Common myeloid progenitor, CD34-positive (primary cell): ENCODE measurements at regions of chr3 and their contacts with region 1.

Region 1: DNA sequence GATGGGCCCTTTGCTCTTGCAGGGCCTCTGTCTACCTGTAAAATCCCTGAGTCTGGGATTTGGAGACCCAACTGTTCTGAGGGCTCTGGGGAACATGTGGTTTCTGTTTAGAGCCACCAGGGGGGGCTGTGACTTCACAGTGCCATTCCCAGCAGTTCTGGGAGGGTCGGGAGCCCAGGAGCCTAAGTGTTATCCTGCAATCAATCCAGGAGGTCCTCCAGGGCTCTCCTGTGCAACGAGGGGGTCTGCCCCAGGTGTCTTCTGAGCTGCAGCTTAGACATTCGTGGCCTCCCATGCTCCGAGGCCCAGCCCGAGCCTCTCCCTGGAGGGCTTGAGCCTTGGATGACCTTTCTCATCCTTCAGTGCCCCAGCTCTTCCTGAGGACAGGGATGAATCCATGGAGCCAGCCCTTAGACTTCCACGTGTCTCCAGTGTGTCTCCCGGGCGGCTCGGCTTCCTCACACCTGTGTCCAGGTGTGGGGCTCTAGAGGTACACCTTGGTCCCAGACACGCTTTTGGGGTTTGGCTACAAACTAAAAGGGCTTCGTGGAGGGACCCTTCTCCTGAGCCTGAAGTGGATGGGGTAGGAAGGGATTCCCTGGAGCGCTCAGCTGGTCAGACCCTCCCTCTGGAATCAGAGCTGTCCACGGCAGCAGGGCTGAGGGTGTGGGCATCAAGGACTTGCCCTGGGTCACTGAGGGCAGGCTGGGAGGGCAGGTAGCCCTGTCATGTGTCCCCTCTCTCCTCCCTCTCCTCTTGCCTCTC is 20.3 kb upstream of the ABTB1 start:
- DNase-seq: peak; percentile 40 to 59 (median 42)
- H3K4me3 ChIP-seq: no peak overlapping the region
- H3K27ac ChIP-seq: no peak overlapping the region
- H3K4me1 ChIP-seq: no peaks in the 10 kb centered on the region
- H3K27me3 ChIP-seq: no peaks in the 10 kb centered on the region

Region 2: DNA sequence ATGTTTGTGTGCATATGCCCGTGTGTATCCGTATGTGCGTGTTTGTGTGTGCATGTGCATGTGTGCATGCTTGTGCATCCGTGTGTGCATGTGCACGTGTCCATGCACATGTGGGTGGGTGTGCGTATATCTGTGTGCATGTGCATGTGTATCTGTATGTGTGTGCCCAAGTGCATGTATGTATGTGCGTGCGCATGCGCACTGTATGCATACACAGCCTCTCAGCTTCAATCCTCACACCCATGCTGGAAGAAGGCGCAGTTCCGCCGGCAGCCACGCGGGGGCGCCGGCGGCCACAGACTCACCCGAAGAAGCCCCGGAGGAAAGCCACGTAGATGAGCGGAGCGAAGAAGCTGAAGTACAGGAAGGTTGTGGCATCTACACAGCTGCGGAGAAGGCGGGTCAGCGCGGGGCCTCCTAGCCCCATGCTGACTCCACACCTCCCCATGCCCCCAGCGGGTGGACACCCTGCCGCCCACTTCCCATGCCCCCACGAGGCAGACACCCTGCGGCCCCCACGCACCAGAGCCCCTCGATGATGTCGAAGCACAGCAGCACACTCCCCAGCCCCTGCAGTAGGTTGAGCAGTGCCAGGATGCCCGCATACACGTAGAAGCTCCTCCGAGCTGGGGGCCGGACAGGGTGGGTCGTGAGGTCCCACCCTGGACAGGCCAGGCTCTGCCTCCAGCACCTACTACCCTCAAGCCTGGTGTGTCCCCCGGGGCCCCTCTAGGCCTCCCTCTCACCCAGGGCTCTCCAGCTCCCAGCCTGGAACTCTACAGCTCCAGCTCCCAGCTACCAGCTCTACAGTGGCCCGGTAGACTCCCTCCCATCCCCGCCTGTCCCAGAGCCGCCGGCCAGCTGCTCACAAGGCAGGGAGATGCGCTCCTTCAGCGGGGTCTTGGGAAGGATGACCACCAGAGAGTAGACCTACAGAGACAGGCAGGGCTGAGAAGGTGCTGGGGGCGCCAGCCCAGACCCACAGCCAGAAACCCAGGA is 77.2 kb before region 1 on chr3:
- CTCF ChIA-PET with region 1: interaction called, 16 read pairs
- POLR2A ChIA-PET with region 1: no interaction called
- DNase-seq: peak; percentile 85 to 94 (median 91)
- H3K4me3 ChIP-seq: peak overlapping the region in 1 of 7 experiments; percentile 8
- H3K27ac ChIP-seq: no peak overlapping the region
- H3K4me1 ChIP-seq: peaks cover 0 to 9% (median 6%) of the 10 kb centered on the region in 4 experiments
- H3K27me3 ChIP-seq: no peaks in the 10 kb centered on the region

Region 3: DNA sequence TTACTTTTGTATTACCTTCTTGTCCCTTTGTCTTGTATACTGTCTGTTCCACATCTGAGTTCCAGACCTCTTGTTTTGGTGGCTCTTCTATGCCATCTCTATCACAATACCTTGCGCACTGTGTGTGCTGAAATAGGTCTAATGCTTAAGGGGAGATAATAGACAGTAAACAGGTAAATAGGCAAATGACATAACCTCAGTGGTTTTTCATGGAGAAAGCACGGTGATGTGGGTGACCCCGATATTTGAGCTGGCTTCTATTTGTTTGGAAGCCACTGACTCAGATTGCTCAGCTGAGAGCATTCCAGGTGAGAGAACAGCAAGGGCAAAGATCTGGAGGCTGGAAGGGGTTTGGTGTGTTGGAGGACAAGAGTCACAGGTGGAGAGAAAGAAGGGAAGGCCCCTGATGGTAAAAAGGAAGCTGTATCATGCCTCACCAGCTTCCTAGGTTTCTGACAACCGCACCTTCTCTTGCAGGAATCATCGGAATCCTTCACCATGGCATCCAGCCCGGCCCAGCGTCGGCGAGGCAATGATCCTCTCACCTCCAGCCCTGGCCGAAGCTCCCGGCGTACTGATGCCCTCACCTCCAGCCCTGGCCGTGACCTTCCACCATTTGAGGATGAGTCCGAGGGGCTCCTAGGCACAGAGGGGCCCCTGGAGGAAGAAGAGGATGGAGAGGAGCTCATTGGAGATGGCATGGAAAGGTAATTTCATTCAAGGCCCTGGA is 53.4 kb before region 1 on chr3:
- CTCF ChIA-PET with region 1: no interaction called
- POLR2A ChIA-PET with region 1: no interaction called
- DNase-seq: no peak
- H3K4me3 ChIP-seq: peak overlapping the region in 6 of 7 experiments; percentile 53 to 88 (median 82)
- H3K27ac ChIP-seq: peak overlapping the region; percentile 37 to 81
- H3K4me1 ChIP-seq: peaks cover 5 to 42% (median 25%) of the 10 kb centered on the region in 4 experiments
- H3K27me3 ChIP-seq: no peaks in the 10 kb centered on the region

Region 4: GRCh38 chr3:127690823-127691452 is 38.5 kb after region 1 on chr3:
- CTCF ChIA-PET with region 1: interaction called, 16 read pairs
- POLR2A ChIA-PET with region 1: no interaction called
- DNase-seq: peak in 2 of 3 donors; percentile 33 to 40
- H3K4me3 ChIP-seq: no peak overlapping the region
- H3K27ac ChIP-seq: no peak overlapping the region
- H3K4me1 ChIP-seq: peaks cover 0 to 2% (median 0%) of the 10 kb centered on the region in 4 experiments
- H3K27me3 ChIP-seq: no peaks in the 10 kb centered on the region

Region 5: GRCh38 chr3:127697551-127698240 is 45.3 kb after region 1 on chr3:
- CTCF ChIA-PET with region 1: interaction called, 16 read pairs
- POLR2A ChIA-PET with region 1: no interaction called
- DNase-seq: peak; percentile 55 to 74 (median 73)
- H3K4me3 ChIP-seq: no peak overlapping the region
- H3K27ac ChIP-seq: no peak overlapping the region
- H3K4me1 ChIP-seq: peaks cover 0 to 29% (median 20%) of the 10 kb centered on the region in 4 experiments
- H3K27me3 ChIP-seq: no peaks in the 10 kb centered on the region

Region 6: GRCh38 chr3:127831723-127832172 is 179.3 kb after region 1 on chr3:
- CTCF ChIA-PET with region 1: interaction called, 19 read pairs
- POLR2A ChIA-PET with region 1: no interaction called
- DNase-seq: peak; percentile 67 to 86 (median 81)
- H3K4me3 ChIP-seq: no peak overlapping the region
- H3K27ac ChIP-seq: no peak overlapping the region
- H3K4me1 ChIP-seq: peaks cover 5 to 15% (median 8%) of the 10 kb centered on the region in 4 experiments
- H3K27me3 ChIP-seq: no peaks in the 10 kb centered on the region

Region 7: GRCh38 chr3:127959846-127960245 is 307.4 kb after region 1 on chr3:
- CTCF ChIA-PET with region 1: interaction called, 12 read pairs
- POLR2A ChIA-PET with region 1: no interaction called
- DNase-seq: peak; percentile 33 to 58 (median 53)
- H3K4me3 ChIP-seq: no peak overlapping the region
- H3K27ac ChIP-seq: no peak overlapping the region
- H3K4me1 ChIP-seq: no peaks in the 10 kb centered on the region
- H3K27me3 ChIP-seq: no peaks in the 10 kb centered on the region